ENCODE measurements at regions of chr13 and their contacts with region 1.

Region 1: GRCh38 chr13:78603240-78603957 is at the start of gene POU4F1:
- DNase-seq: peak; percentile 80
- ATAC-seq: peak; percentile 63
- H3K4me3 ChIP-seq: peak within 1 kb of the TSS; percentile 7 to 62 (median 38)
- H3K4me3 Mint-ChIP-seq: peak within 1 kb of the TSS; percentile 90
- H3K27ac ChIP-seq: no peak within 1 kb of the TSS
- H3K27ac Mint-ChIP-seq: peak within 1 kb of the TSS; percentile 80
- H3K4me1 ChIP-seq: peaks cover 51 to 84% of the 10 kb centered on the region in 2 donors
- H3K4me1 Mint-ChIP-seq: peaks cover 54% of the 10 kb centered on the region
- H3K27me3 ChIP-seq: peaks cover 11 to 92% (median 86%) of the 10 kb centered on the region in 4 experiments
- H3K27me3 Mint-ChIP-seq: peaks cover 82% of the 10 kb centered on the region
- CTCF ChIP-seq: no peak
- total RNA-seq, gene POU4F1: 0.17 TPM in 1 of 2 replicates, not detected in the other

Region 2: DNA sequence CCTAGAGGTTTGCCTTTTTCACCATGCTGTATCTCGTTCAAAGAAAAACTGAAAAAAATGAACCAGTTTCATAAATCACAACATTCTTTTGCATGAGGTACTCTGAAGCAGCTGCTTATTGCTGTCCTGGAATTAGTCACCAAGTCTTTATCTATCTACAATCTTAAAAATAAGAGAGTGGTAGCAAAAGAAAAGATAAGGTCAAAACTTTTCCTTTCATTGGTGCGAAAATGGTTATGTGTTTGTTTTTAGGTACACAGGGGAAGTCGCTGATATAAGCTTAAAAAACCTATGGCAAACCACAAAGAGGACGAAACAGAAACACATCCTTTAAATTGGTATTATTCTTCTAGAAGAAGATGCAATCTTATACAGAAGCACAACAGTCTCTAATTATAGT is 34.8 kb after region 1 on chr13:
- CTCF ChIA-PET with region 1: no interaction called
- POLR2A ChIA-PET with region 1: interaction called, 12 read pairs
- intact Hi-C with region 1: no loop called
- DNase-seq: no peak
- ATAC-seq: no peak
- H3K4me3 ChIP-seq: no peak overlapping the region
- H3K4me3 Mint-ChIP-seq: no peak overlapping the region
- H3K27ac ChIP-seq: no peak overlapping the region
- H3K27ac Mint-ChIP-seq: no peak overlapping the region
- H3K4me1 ChIP-seq: no peaks in the 10 kb centered on the region
- H3K4me1 Mint-ChIP-seq: peaks cover 5% of the 10 kb centered on the region
- H3K27me3 ChIP-seq: no peaks in the 10 kb centered on the region
- H3K27me3 Mint-ChIP-seq: no peaks in the 10 kb centered on the region
- CTCF ChIP-seq: no peak

Region 3: DNA sequence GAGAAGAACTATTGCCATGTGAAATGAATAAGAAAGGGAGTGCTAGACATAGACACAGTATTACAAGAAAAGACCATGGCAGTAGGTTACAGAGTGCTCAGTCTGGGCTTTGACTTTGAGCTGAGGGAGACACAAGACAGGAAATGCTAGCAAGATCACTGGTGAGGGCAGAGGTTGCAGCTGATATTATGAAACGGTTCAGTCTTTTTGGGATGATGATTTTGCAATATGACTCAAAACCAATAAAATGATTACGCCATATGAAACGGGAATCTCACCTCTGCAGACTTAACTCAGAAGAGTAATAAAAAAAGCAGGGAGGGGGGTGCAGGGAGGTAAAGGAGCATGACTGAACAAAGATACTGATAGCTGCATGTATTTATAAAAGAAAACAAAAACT is 679.6 kb after region 1 on chr13:
- CTCF ChIA-PET with region 1: no interaction called
- POLR2A ChIA-PET with region 1: no interaction called
- intact Hi-C with region 1: no loop called
- DNase-seq: no peak
- ATAC-seq: no peak
- H3K4me3 ChIP-seq: no peak overlapping the region
- H3K4me3 Mint-ChIP-seq: no peak overlapping the region
- H3K27ac ChIP-seq: no peak overlapping the region
- H3K27ac Mint-ChIP-seq: no peak overlapping the region
- H3K4me1 ChIP-seq: no peaks in the 10 kb centered on the region
- H3K4me1 Mint-ChIP-seq: no peaks in the 10 kb centered on the region
- H3K27me3 ChIP-seq: no peaks in the 10 kb centered on the region
- H3K27me3 Mint-ChIP-seq: no peaks in the 10 kb centered on the region
- CTCF ChIP-seq: no peak

Measured in B cell (primary cell).